B cell (primary cell): ENCODE measurements at regions of chr7 and their contacts with region 1.

Region 1: GRCh38 chr7:142603870-142604448 is 145.3 kb upstream of the PRSS1 start:
- DNase-seq: peak; percentile 72
- ATAC-seq: peak; percentile 63
- H3K4me3 ChIP-seq: no peak overlapping the region
- H3K4me3 Mint-ChIP-seq: no peak overlapping the region
- H3K27ac ChIP-seq: no peak overlapping the region
- H3K27ac Mint-ChIP-seq: no peak overlapping the region
- H3K4me1 ChIP-seq: no peaks in the 10 kb centered on the region
- H3K4me1 Mint-ChIP-seq: no peaks in the 10 kb centered on the region
- H3K27me3 ChIP-seq: peaks cover 0 to 2% (median 0%) of the 10 kb centered on the region in 4 experiments
- H3K27me3 Mint-ChIP-seq: peaks cover 32% of the 10 kb centered on the region
- CTCF ChIP-seq: peak; percentile 93

Region 2: GRCh38 chr7:142438235-142438922 is 165.6 kb before region 1 on chr7:
- CTCF ChIA-PET with region 1: no interaction called
- POLR2A ChIA-PET with region 1: no interaction called
- intact Hi-C with region 1: no loop called
- DNase-seq: peak; percentile 8
- ATAC-seq: no peak
- H3K4me3 ChIP-seq: no peak overlapping the region
- H3K4me3 Mint-ChIP-seq: no peak overlapping the region
- H3K27ac ChIP-seq: no peak overlapping the region
- H3K27ac Mint-ChIP-seq: no peak overlapping the region
- H3K4me1 ChIP-seq: peaks cover 3 to 13% of the 10 kb centered on the region in 2 donors
- H3K4me1 Mint-ChIP-seq: peaks cover 19% of the 10 kb centered on the region
- H3K27me3 ChIP-seq: no peaks in the 10 kb centered on the region
- H3K27me3 Mint-ChIP-seq: peaks cover 42% of the 10 kb centered on the region
- CTCF ChIP-seq: no peak

Region 3: DNA sequence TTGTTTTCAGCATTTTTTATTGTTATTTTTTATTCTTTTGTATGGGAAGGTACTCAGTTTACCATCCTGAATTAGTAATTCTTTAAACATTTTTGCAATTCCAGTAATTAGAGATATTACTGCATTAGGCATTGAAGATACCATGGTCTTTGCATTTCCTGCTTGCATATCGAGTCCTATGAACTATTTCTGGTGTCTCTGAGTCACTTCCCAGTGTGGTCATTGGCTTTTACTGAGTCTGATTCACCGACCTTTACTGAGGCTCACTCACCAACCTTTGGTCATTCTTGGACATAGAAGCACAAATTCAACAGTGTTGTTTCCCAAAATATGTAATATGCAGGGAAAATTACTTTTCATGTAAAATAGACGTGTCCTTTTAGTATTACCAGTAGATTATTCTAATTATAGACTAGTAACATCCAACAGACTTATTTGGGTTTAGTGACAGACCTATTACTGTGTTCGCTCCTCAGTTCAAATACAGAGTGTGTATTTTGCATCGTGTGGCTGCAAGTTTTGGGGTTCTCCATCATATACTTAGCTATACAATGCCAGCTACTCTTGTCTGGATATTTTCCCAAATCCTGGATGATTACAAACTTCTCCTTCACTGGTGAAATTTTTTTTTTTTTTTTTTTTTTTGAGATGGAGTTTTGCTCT is 35.4 kb before region 1 on chr7:
- CTCF ChIA-PET with region 1: no interaction called
- POLR2A ChIA-PET with region 1: no interaction called
- intact Hi-C with region 1: no loop called
- DNase-seq: no peak
- ATAC-seq: no peak
- H3K4me3 ChIP-seq: no peak overlapping the region
- H3K4me3 Mint-ChIP-seq: no peak overlapping the region
- H3K27ac ChIP-seq: no peak overlapping the region
- H3K27ac Mint-ChIP-seq: no peak overlapping the region
- H3K4me1 ChIP-seq: peaks cover 0 to 4% of the 10 kb centered on the region in 2 donors
- H3K4me1 Mint-ChIP-seq: no peaks in the 10 kb centered on the region
- H3K27me3 ChIP-seq: peaks cover 0 to 10% (median 3%) of the 10 kb centered on the region in 4 experiments
- H3K27me3 Mint-ChIP-seq: peaks cover 68% of the 10 kb centered on the region
- CTCF ChIP-seq: no peak

Region 4: DNA sequence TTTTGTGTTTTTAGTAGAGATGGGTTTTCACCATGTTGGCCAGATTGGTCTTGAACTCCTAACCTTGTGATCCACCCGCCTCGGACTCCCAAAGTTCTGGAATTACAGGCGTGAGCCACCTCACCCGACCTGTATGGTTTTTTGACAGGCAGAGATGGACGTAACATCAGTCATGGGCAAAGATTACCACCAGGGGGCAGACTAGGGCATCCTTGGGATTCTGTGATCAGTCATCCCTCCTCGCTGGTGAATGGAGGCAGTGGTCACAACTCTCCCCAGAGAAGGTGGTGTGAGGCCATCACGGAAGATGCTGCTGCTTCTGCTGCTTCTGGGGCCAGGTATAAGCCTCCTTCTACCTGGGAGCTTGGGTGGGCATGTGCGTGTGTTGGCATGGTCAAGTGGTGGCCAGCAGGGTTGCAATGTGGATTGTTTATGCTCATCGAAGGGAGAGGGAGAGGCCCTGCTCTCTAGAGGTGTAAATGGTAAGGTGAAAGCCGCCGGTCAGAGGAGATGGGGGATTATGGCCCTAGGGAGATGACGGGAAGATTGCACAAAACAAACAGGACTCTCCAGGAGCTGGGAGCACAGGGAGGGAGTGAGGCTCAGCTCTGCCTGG is 22.6 kb after region 1 on chr7:
- CTCF ChIA-PET with region 1: interaction called, 22 read pairs
- POLR2A ChIA-PET with region 1: no interaction called
- intact Hi-C with region 1: no loop called
- DNase-seq: peak; percentile 71
- ATAC-seq: peak; percentile 66
- H3K4me3 ChIP-seq: no peak overlapping the region
- H3K4me3 Mint-ChIP-seq: no peak overlapping the region
- H3K27ac ChIP-seq: no peak overlapping the region
- H3K27ac Mint-ChIP-seq: no peak overlapping the region
- H3K4me1 ChIP-seq: no peaks in the 10 kb centered on the region
- H3K4me1 Mint-ChIP-seq: peaks cover 3% of the 10 kb centered on the region
- H3K27me3 ChIP-seq: peaks cover 0 to 16% (median 0%) of the 10 kb centered on the region in 4 experiments
- H3K27me3 Mint-ChIP-seq: peaks cover 36% of the 10 kb centered on the region
- CTCF ChIP-seq: peak; percentile 78

Region 5: DNA sequence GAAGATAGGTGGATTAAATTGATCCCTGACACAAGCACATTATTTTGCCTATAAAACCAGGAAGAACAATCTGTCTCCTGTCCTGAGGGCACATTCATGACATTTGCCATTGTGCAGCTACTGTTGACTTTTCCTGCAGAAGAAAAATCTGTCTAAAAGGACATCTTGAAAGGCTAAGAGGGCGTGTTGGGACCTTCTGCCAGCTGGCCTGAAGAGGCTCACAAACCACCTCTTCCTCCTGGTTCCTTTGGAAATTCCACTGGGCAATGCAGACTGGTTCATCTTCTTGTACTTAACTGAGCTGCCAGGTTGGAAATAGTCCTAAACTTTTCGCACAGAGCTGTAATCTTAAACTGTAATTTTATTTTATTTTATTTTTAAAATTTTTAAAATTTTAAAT is 492.2 kb after region 1 on chr7:
- CTCF ChIA-PET with region 1: no interaction called
- POLR2A ChIA-PET with region 1: no interaction called
- intact Hi-C with region 1: no loop called
- DNase-seq: no peak
- ATAC-seq: no peak
- H3K4me3 ChIP-seq: no peak overlapping the region
- H3K4me3 Mint-ChIP-seq: no peak overlapping the region
- H3K27ac ChIP-seq: no peak overlapping the region
- H3K27ac Mint-ChIP-seq: no peak overlapping the region
- H3K4me1 ChIP-seq: no peaks in the 10 kb centered on the region
- H3K4me1 Mint-ChIP-seq: peaks cover 8% of the 10 kb centered on the region
- H3K27me3 ChIP-seq: no peaks in the 10 kb centered on the region
- H3K27me3 Mint-ChIP-seq: no peaks in the 10 kb centered on the region
- CTCF ChIP-seq: no peak

Region 6: DNA sequence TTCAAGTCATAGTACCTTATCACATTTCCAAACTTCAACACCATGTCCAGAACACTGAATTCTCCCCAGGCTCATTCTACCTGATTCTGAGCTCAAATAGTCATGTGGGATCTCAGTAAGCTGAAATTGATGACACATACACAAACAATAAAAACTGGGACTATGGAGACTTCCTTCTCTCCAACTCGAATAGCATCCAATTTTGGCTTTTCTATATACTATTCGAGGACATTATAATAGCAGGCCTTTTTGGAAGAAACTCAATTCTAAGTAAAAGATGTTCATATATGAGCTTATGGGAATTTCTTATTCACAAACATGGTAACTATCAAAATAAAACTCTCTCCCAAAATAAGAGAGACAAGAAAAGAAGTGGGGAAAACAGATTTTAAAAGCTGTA is 617.3 kb after region 1 on chr7:
- CTCF ChIA-PET with region 1: interaction called, 36 read pairs
- POLR2A ChIA-PET with region 1: no interaction called
- intact Hi-C with region 1: no loop called
- DNase-seq: no peak
- ATAC-seq: no peak
- H3K4me3 ChIP-seq: no peak overlapping the region
- H3K4me3 Mint-ChIP-seq: no peak overlapping the region
- H3K27ac ChIP-seq: no peak overlapping the region
- H3K27ac Mint-ChIP-seq: no peak overlapping the region
- H3K4me1 ChIP-seq: no peaks in the 10 kb centered on the region
- H3K4me1 Mint-ChIP-seq: no peaks in the 10 kb centered on the region
- H3K27me3 ChIP-seq: peaks cover 0 to 7% (median 4%) of the 10 kb centered on the region in 4 experiments
- H3K27me3 Mint-ChIP-seq: peaks cover 26% of the 10 kb centered on the region
- CTCF ChIP-seq: no peak